ENCODE measurements at regions of chr9 and their contacts with region 1.

Region 1: GRCh38 chr9:101449140-101449721 is 13.7 kb upstream of the ALDOB start:
- DNase-seq: peak; percentile 85
- H3K4me3 Mint-ChIP-seq: peak overlapping the region; percentile 64
- H3K27ac Mint-ChIP-seq: peak overlapping the region; percentile 78
- H3K4me1 Mint-ChIP-seq: peaks cover 21% of the 10 kb centered on the region
- H3K27me3 Mint-ChIP-seq: no peaks in the 10 kb centered on the region
- CTCF ChIP-seq: peak; percentile 50

Region 2: GRCh38 chr9:101311758-101312420 is 137.3 kb before region 1 on chr9:
- CTCF ChIA-PET with region 1: interaction called, 6 read pairs
- intact Hi-C with region 1: loop called (anchors 5 kb)
- DNase-seq: peak; percentile 15
- H3K4me3 Mint-ChIP-seq: no peak overlapping the region
- H3K27ac Mint-ChIP-seq: no peak overlapping the region
- H3K4me1 Mint-ChIP-seq: peaks cover 18% of the 10 kb centered on the region
- H3K27me3 Mint-ChIP-seq: peaks cover 14% of the 10 kb centered on the region
- CTCF ChIP-seq: peak; percentile 45

Region 3: GRCh38 chr9:101342595-101342994 is 106.6 kb before region 1 on chr9:
- CTCF ChIA-PET with region 1: no interaction called
- intact Hi-C with region 1: no loop called
- DNase-seq: no peak
- H3K4me3 Mint-ChIP-seq: no peak overlapping the region
- H3K27ac Mint-ChIP-seq: no peak overlapping the region
- H3K4me1 Mint-ChIP-seq: no peaks in the 10 kb centered on the region
- H3K27me3 Mint-ChIP-seq: no peaks in the 10 kb centered on the region
- CTCF ChIP-seq: no peak

Region 4: DNA sequence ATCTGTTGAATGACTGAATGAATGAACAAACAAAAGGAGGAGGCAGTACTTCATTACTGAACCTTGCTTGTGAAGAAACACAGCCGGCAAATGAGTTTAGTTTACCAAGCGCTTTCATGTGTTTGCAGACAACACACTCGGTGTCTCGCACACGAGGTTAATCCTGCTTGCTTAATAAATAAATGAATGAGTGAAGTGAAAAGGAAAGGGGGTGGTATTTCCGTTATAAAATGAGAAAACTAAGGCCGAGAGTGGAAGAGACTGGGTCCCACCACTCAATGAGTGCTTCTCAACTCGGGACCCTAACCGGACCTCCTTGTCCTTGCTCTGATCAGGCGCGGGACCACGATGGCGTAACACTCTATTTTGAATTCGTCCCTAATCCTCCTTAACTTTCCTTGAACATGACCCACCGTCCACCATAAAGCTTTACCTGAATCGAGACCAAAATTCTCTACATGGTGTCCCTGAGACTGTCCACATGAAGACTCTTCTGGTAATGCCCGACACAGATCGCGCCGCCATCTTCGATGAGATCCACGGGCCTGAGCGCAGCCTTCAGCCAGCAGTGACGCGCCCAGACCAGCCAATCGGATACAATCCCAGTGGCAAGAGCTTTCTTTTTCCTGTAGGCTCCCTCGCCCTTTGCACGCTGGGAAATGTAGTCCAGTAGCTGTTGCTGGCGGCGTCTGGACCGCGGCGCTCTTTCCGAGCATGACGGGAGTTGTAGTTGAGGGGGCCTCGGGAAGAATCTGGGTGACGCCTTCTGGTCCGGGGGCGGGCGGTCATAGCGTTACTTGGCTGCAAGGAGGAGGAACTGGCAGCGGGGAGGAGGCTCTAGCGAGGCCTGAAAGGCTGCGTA is 50.9 kb before region 1 on chr9 and contains the starts of genes MRPL50 and ZNF189:
- CTCF ChIA-PET with region 1: interaction called, 21 read pairs
- intact Hi-C with region 1: loop called (anchors 2 kb)
- DNase-seq: peak; percentile 92
- H3K4me3 Mint-ChIP-seq: peak within 1 kb of the TSS; percentile 93
- H3K27ac Mint-ChIP-seq: peak within 1 kb of the TSS; percentile 92
- H3K4me1 Mint-ChIP-seq: peaks cover 30% of the 10 kb centered on the region
- H3K27me3 Mint-ChIP-seq: no peaks in the 10 kb centered on the region
- CTCF ChIP-seq: no peak
- total RNA-seq, gene MRPL50: 14.0 TPM in 2 replicates
- total RNA-seq, gene ZNF189: 20.1 and 21.5 TPM in 2 replicates

Region 5: GRCh38 chr9:101468116-101468515 is 18.9 kb after region 1 on chr9:
- CTCF ChIA-PET with region 1: no interaction called
- intact Hi-C with region 1: no loop called
- DNase-seq: no peak
- H3K4me3 Mint-ChIP-seq: no peak overlapping the region
- H3K27ac Mint-ChIP-seq: no peak overlapping the region
- H3K4me1 Mint-ChIP-seq: peaks cover 2% of the 10 kb centered on the region
- H3K27me3 Mint-ChIP-seq: no peaks in the 10 kb centered on the region
- CTCF ChIP-seq: no peak